Natural killer cell (primary cell): ENCODE measurements at regions of chr20 and their contacts with region 1.

Region 1: DNA sequence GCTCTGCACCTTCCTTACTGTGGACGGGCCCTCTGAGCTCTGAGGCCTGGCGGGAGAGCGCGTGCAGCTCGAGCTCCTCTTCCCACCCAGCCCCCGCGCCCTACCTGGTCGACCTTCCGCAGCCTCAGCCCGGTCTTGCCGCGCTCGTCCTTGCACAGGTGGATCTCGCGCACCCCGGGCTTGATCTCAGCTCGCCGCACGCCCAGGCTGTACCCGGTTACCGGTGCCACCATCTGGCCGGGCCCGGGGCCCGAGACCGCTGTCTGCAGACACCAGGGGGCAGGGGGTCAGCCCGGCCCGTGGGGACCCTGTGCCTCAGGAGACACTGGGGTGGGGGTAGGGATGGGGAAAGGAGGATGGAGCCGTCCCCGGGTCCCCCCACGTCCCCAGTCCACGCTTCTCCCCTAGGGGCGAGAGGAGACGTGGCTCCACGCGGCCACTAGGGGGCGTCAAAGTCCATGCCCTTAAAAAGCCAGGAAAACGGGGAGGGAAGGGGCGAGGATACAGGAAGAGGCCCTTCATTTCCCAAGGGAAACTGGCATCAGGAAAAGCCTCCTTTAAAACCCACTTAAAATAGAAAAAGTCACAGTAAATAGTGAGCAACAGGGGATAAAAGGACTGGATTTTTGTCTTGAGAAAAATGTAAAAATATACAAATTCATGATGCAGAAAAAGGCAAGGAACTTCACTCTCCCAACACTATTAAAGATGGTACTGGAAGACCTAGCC is 15.5 kb downstream of the SDCBP2 start:
- DNase-seq: peak; percentile 58 to 85
- ATAC-seq: peak in 2 of 3 donors; percentile 82 to 86
- H3K4me3 ChIP-seq: no peak overlapping the region
- H3K4me3 Mint-ChIP-seq: no peak overlapping the region
- H3K27ac ChIP-seq: no peak overlapping the region
- H3K27ac Mint-ChIP-seq: no peak overlapping the region
- H3K4me1 ChIP-seq: peaks cover 6% of the 10 kb centered on the region
- H3K4me1 Mint-ChIP-seq: peaks cover 0 to 5% of the 10 kb centered on the region in 2 donors
- H3K27me3 ChIP-seq: no peaks in the 10 kb centered on the region
- H3K27me3 Mint-ChIP-seq: peaks cover 20 to 27% of the 10 kb centered on the region in 2 donors
- CTCF ChIP-seq: peak; percentile 100

Region 2: GRCh38 chr20:1212607-1213396 is 100.6 kb before region 1 on chr20:
- intact Hi-C with region 1: no loop called
- DNase-seq: peak; percentile 38 to 85
- ATAC-seq: peak; percentile 90 to 99 (median 94)
- H3K4me3 ChIP-seq: no peak overlapping the region
- H3K4me3 Mint-ChIP-seq: no peak overlapping the region
- H3K27ac ChIP-seq: no peak overlapping the region
- H3K27ac Mint-ChIP-seq: no peak overlapping the region
- H3K4me1 ChIP-seq: peaks cover 4% of the 10 kb centered on the region
- H3K4me1 Mint-ChIP-seq: peaks cover 5 to 8% of the 10 kb centered on the region in 2 donors
- H3K27me3 ChIP-seq: no peaks in the 10 kb centered on the region
- H3K27me3 Mint-ChIP-seq: peaks cover 22 to 36% of the 10 kb centered on the region in 2 donors
- CTCF ChIP-seq: peak; percentile 82

Region 3: GRCh38 chr20:1325173-1326030 is 12.0 kb after region 1 on chr20:
- intact Hi-C with region 1: loop called (anchors 1 kb)
- DNase-seq: peak; percentile 98 to 100
- ATAC-seq: peak; percentile 87 to 96 (median 89)
- H3K4me3 ChIP-seq: peak overlapping the region; percentile 76
- H3K4me3 Mint-ChIP-seq: no peak overlapping the region
- H3K27ac ChIP-seq: peak overlapping the region; percentile 94
- H3K27ac Mint-ChIP-seq: no peak overlapping the region
- H3K4me1 ChIP-seq: peaks cover 17% of the 10 kb centered on the region
- H3K4me1 Mint-ChIP-seq: peaks cover 0 to 6% of the 10 kb centered on the region in 2 donors
- H3K27me3 ChIP-seq: no peaks in the 10 kb centered on the region
- H3K27me3 Mint-ChIP-seq: peaks cover 10 to 11% of the 10 kb centered on the region in 2 donors
- CTCF ChIP-seq: no peak

Region 4: GRCh38 chr20:1437235-1437904 is 124.0 kb after region 1 on chr20:
- intact Hi-C with region 1: loop called (anchors 1 kb)
- DNase-seq: peak; percentile 66 to 91
- ATAC-seq: peak; percentile 70 to 73 (median 70)
- H3K4me3 ChIP-seq: no peak overlapping the region
- H3K4me3 Mint-ChIP-seq: no peak overlapping the region
- H3K27ac ChIP-seq: no peak overlapping the region
- H3K27ac Mint-ChIP-seq: no peak overlapping the region
- H3K4me1 ChIP-seq: peaks cover 15% of the 10 kb centered on the region
- H3K4me1 Mint-ChIP-seq: peaks cover 13 to 25% of the 10 kb centered on the region in 2 donors
- H3K27me3 ChIP-seq: peaks cover 12% of the 10 kb centered on the region
- H3K27me3 Mint-ChIP-seq: peaks cover 12 to 26% of the 10 kb centered on the region in 2 donors
- CTCF ChIP-seq: peak; percentile 83

Region 5: DNA sequence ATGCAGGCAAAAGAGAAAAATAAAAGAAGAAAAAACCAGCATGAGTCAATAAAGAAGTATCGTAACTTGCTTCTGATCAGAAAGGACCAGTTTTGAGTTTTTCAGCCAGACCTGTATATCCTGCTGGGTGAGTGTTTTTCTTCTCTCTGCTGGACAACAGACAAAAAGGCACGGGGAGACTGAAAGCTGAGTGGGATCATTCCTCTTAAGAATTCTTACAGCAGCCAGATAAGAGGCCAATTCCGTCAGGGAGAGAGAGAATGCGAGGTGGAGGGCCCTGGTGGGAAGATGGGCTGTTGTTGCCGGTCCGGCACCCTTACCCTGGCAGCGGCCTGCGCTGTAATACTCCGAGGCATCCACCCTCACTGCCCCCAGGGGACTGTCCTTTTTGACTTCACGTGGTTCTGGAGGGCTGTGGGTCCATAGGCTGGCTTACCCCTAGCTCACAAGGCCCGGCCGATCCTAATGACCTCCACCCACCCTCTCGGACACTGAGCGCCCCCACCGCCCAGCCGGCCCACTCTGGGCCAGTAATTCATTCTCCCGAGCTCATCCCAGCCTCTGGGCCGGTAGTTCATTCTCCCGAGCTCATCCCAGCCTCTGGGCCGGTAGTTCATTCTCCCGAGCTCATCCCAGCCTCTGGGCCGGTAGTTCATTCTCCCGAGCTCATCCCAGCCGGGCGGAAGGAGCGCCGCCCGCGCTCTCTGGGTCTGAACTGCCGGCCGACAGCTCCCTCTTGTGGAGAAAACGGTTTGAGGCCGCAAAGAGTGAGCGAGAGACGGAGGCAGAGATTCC is 463.5 kb after region 1 on chr20:
- intact Hi-C with region 1: loop called (anchors 10 kb)
- DNase-seq: peak; percentile 76 to 90
- ATAC-seq: peak; percentile 91 to 96 (median 93)
- H3K4me3 ChIP-seq: peak overlapping the region; percentile 65
- H3K4me3 Mint-ChIP-seq: peak overlapping the region; percentile 92
- H3K27ac ChIP-seq: no peak overlapping the region
- H3K27ac Mint-ChIP-seq: peak overlapping the region; percentile 51 to 81
- H3K4me1 ChIP-seq: peaks cover 13% of the 10 kb centered on the region
- H3K4me1 Mint-ChIP-seq: peaks cover 19 to 21% of the 10 kb centered on the region in 2 donors
- H3K27me3 ChIP-seq: no peaks in the 10 kb centered on the region
- H3K27me3 Mint-ChIP-seq: peaks cover 11 to 15% of the 10 kb centered on the region in 2 donors
- CTCF ChIP-seq: peak; percentile 77